ENCODE measurements at regions of chr4 and their contacts with region 1.

Region 1: GRCh38 chr4:26860157-26860921 is at the start of gene STIM2:
- DNase-seq: peak; percentile 98
- ATAC-seq: peak; percentile 68
- H3K4me3 Mint-ChIP-seq: peak within 1 kb of the TSS; percentile 91
- H3K27ac Mint-ChIP-seq: peak within 1 kb of the TSS; percentile 95
- H3K4me1 Mint-ChIP-seq: peaks cover 51% of the 10 kb centered on the region
- H3K27me3 Mint-ChIP-seq: no peaks in the 10 kb centered on the region
- total RNA-seq, gene STIM2: 32.9 to 36.4 TPM

Region 2: DNA sequence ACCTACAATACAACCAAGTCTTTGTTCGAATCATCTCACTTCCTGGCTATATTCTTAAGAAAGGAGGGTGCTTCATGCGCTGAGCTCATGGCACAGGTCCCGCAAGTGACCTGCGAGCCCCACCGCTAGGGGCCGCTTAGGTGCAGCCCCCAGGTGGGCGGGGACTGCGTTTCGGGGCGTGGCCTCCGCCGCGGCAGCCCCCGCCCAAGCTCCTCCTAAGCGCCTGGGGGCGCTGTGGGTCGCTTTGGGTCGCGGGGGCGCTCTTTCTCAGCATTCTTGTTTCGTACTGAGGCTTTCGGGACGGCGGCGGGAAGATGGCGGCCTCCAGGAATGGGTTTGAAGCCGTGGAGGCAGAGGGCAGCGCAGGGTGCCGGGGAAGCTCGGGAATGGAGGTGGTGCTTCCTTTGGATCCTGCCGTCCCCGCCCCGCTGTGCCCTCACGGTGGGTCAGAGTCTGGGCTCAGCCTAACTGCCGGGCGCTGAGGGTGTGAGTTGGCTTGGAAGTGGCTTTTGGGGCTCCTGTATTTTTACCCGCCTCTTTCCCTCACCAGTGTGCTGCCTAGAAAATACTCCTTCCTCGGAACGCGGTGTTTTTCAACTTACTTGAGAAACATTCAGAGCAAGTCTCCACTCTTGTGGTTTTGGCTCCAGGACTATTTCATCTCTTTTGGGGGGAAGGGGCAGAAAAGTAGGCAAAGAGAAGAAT is 1547.7 kb before region 1 on chr4 and contains the start of gene ZCCHC4:
- CTCF ChIA-PET with region 1: interaction called, 3 read pairs
- POLR2A ChIA-PET with region 1: no interaction called
- intact Hi-C with region 1: loop called in 1 of 2 experiments (anchors 10 kb)
- DNase-seq: peak; percentile 94
- ATAC-seq: peak; percentile 99
- H3K4me3 Mint-ChIP-seq: peak within 1 kb of the TSS; percentile 96
- H3K27ac Mint-ChIP-seq: peak within 1 kb of the TSS; percentile 94
- H3K4me1 Mint-ChIP-seq: peaks cover 22% of the 10 kb centered on the region
- H3K27me3 Mint-ChIP-seq: peaks cover 3% of the 10 kb centered on the region
- total RNA-seq, gene ZCCHC4: 11.7 to 12.3 TPM

Region 3: DNA sequence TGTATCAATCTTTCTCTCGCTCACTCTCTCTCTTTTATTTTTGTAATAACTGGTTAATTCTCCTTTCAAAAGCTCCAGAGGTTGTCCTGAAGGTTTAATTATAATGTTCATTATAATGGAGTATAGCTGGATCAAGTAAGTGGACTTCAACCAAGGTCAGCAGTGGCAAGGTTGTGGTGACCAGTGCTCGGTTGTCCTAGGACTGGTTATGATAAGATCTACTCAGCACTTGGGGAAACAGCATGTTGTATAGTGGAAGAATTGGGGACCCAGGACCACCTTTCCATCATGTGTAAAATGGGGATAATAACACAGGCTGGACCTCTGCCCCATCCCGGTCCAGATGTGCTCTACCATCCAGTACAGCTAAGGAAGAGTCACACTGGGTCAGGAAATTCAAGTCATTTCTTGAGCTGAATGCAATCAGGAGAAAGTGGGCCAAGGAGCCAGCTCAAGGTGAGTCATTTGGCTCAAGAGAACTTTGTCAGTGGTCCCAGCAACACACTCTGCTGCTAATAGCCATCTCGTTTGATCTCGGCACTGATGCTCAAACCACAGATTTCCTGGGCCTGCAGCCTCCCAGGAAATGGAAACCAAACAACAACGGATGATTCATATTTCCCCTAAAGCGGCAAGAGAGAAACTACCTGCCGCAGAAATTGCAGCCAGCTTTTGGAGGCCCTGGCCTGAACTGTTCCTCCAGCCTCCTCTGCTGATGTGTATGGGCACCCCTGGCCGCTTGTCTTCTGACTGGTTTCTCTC is 663.1 kb before region 1 on chr4:
- CTCF ChIA-PET with region 1: no interaction called
- POLR2A ChIA-PET with region 1: no interaction called
- intact Hi-C with region 1: loop called in 1 of 2 experiments (anchors 5 kb)
- DNase-seq: peak; percentile 80
- ATAC-seq: peak; percentile 75
- H3K4me3 Mint-ChIP-seq: peak overlapping the region; percentile 52
- H3K27ac Mint-ChIP-seq: peak overlapping the region; percentile 91
- H3K4me1 Mint-ChIP-seq: peaks cover 68% of the 10 kb centered on the region
- H3K27me3 Mint-ChIP-seq: peaks cover 2% of the 10 kb centered on the region

Region 4: GRCh38 chr4:26583865-26584652 is 276.3 kb before region 1 on chr4 and contains the start of gene TBC1D19:
- CTCF ChIA-PET with region 1: no interaction called
- POLR2A ChIA-PET with region 1: no interaction called
- intact Hi-C with region 1: loop called (anchors 1 kb)
- DNase-seq: peak; percentile 93
- ATAC-seq: peak; percentile 96
- H3K4me3 Mint-ChIP-seq: peak within 1 kb of the TSS; percentile 93
- H3K27ac Mint-ChIP-seq: peak within 1 kb of the TSS; percentile 92
- H3K4me1 Mint-ChIP-seq: peaks cover 24% of the 10 kb centered on the region
- H3K27me3 Mint-ChIP-seq: peaks cover 1% of the 10 kb centered on the region
- total RNA-seq, gene TBC1D19: 5.0 to 5.3 TPM

Region 5: DNA sequence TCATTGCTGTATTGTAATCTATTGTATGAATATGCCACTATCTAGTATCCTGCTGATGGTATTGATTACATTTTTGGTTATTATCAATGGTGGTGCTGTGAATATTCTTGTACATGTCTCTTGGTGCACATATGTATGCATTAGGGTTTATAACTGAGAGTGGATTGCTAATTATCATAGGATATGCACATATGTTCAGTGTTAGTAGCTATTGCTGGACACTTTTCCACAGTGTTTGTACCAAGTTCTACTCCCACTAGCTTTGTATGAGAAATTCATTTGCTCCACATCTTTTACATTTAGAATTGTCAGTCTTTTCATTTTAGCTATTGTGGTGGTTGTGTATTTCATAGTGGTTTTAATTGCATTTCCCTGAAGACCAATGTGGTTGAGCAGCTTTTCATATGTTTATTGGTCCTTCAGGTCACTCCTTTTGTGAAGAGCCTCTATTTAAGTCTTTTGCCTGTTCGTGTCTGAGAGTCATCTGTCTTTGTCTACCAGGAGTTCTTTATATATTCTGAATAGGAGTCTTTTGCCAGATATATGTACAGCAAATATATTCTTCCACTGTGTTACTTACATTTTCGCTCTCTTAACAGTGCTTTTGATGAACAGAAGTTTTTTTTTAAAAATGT is 189.3 kb before region 1 on chr4:
- CTCF ChIA-PET with region 1: no interaction called
- POLR2A ChIA-PET with region 1: no interaction called
- intact Hi-C with region 1: no loop called
- DNase-seq: no peak
- ATAC-seq: no peak
- H3K4me3 Mint-ChIP-seq: no peak overlapping the region
- H3K27ac Mint-ChIP-seq: no peak overlapping the region
- H3K4me1 Mint-ChIP-seq: no peaks in the 10 kb centered on the region
- H3K27me3 Mint-ChIP-seq: no peaks in the 10 kb centered on the region

Region 6: GRCh38 chr4:26873391-26874026 is 13.2 kb after region 1 on chr4:
- CTCF ChIA-PET with region 1: interaction called, 5 read pairs
- POLR2A ChIA-PET with region 1: interaction called, 10 read pairs
- intact Hi-C with region 1: loop called (anchors 1 to 2 kb)
- DNase-seq: peak; percentile 77
- ATAC-seq: peak; percentile 94
- H3K4me3 Mint-ChIP-seq: peak overlapping the region; percentile 4
- H3K27ac Mint-ChIP-seq: peak overlapping the region; percentile 83
- H3K4me1 Mint-ChIP-seq: peaks cover 80% of the 10 kb centered on the region
- H3K27me3 Mint-ChIP-seq: no peaks in the 10 kb centered on the region

Region 7: DNA sequence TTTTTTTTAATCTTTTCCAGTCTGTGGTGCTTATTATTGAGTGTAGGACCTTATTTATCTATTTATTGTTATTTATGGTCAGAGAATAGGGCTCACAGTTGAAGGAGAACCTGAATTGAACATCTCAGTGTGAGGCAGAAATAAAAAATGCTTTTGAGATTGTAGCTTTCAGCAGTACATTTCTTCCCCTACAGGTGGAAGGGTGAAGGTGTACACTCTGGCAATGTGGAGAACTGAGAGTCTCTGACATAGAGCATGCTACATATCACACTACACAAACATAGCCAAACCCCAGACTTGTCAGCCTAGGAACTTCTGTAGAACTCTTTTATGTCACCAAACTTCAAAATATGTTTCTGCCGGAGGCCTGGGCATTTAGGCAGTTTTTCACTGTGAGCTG is 140.5 kb after region 1 on chr4:
- CTCF ChIA-PET with region 1: no interaction called
- POLR2A ChIA-PET with region 1: interaction called, 3 read pairs
- intact Hi-C with region 1: loop called (anchors 1 to 2 kb)
- DNase-seq: no peak
- ATAC-seq: peak; percentile 53
- H3K4me3 Mint-ChIP-seq: no peak overlapping the region
- H3K27ac Mint-ChIP-seq: peak overlapping the region; percentile 51
- H3K4me1 Mint-ChIP-seq: peaks cover 61% of the 10 kb centered on the region
- H3K27me3 Mint-ChIP-seq: no peaks in the 10 kb centered on the region